Mammary epithelial cell (primary cell): ENCODE measurements at regions of chr4 and their contacts with region 1.

Region 1: GRCh38 chr4:162506253-162506652 is 342.5 kb upstream of the FSTL5 start:
- DNase-seq: no peak
- H3K4me3 ChIP-seq: no peak overlapping the region
- H3K27ac ChIP-seq: no peak overlapping the region
- H3K4me1 ChIP-seq: no peaks in the 10 kb centered on the region
- H3K27me3 ChIP-seq: no peaks in the 10 kb centered on the region
- CTCF ChIP-seq: no peak

Region 2: DNA sequence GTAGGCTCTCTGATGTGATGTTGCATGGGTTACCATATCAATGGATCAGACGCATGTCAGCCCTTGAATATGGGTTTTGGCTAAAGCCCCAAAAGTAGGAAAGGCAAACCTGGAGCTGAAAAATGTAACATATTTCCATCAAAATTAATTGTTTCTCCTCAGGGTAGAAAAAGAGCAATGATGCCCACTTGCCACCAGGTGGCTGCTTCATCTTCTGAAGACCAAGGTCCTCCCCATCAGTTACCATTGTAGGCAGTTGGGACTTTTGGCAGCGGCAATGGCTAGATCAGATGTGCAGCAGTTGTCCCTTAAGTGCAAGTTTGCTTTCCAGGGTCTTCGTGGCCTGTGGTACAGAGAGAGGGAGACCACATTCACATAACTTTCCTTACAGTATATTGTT is 542.2 kb after region 1 on chr4:
- CTCF ChIA-PET with region 1: no interaction called
- dilution Hi-C with region 1: no loop called
- in situ Hi-C with region 1: loop called in 1 of 2 experiments (anchors 10 kb)
- intact Hi-C with region 1: no loop called
- DNase-seq: peak; percentile 21
- H3K4me3 ChIP-seq: no peak overlapping the region
- H3K27ac ChIP-seq: no peak overlapping the region
- H3K4me1 ChIP-seq: no peaks in the 10 kb centered on the region
- H3K27me3 ChIP-seq: no peaks in the 10 kb centered on the region
- CTCF ChIP-seq: peak; percentile 59 to 72

Region 3: DNA sequence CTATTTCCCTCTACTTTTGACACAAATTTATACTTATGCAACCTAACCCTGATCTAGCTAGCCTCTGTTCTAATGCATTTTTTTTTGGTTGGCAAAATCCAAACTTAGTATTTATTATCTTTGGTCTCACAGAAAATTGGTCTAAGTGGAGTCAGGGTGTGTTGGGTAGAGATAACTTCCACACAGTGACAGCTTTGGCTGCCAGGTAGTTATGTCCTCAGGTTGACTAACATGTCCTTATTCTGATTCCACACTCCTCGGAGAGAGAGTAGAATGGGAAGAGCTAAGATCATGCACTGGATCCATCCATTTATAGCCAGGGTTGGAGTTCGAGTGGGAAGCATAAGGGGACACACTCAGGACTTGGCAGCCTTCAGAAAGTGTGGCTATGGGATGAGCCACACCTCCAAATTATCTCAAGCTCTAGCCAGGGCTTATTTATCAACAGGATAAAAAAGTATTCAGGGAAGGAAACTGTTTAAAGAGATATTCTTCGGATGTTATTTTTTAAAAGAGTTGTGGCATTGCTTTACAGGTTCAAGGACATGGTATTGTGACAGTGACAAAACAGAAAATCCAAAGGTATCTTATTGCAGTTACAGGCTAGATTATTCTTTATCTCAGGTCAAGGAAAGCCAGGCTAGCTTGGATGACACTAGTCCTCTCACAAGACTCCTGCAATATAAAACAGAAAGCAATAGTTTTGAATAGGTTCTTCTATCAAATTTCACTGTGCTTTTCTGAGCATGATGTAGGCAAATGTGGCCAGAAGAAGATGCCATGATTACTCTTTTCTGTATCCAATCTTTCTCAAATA is 774.7 kb after region 1 on chr4:
- CTCF ChIA-PET with region 1: no interaction called
- dilution Hi-C with region 1: no loop called
- in situ Hi-C with region 1: no loop called
- intact Hi-C with region 1: no loop called
- DNase-seq: no peak
- H3K4me3 ChIP-seq: no peak overlapping the region
- H3K27ac ChIP-seq: no peak overlapping the region
- H3K4me1 ChIP-seq: no peaks in the 10 kb centered on the region
- H3K27me3 ChIP-seq: peaks cover 1% of the 10 kb centered on the region
- CTCF ChIP-seq: no peak